ENCODE measurements at regions of chr7 and their contacts with region 1.

Region 1: DNA sequence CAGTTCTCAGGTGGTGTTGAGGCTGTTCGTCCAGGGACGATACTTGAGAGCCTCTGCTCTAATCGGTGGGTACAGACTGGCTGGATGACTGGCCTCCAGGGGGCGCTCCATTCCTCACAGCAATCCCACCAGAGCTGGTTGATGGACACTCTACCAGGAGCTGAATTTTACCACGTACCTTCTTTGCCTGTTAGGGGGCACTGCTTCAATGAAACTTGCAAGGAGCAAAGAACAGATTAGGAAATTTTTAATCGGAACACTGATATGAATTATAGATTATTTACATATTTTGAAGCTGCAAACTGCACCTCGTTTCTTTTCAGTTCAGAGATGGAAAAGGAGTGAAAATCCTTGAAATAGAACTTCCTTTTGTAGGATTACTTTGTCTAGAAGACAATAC is 44.9 kb downstream of the KBTBD2 start:
- DNase-seq: peak; percentile 91
- ATAC-seq: peak; percentile 100
- H3K4me3 ChIP-seq: no peak overlapping the region
- H3K4me3 Mint-ChIP-seq: no peak overlapping the region
- H3K27ac ChIP-seq: no peak overlapping the region
- H3K27ac Mint-ChIP-seq: no peak overlapping the region
- H3K4me1 ChIP-seq: peaks cover 6 to 7% of the 10 kb centered on the region in 2 donors
- H3K4me1 Mint-ChIP-seq: peaks cover 7% of the 10 kb centered on the region
- H3K27me3 ChIP-seq: peaks cover 0 to 7% (median 1%) of the 10 kb centered on the region in 4 experiments
- H3K27me3 Mint-ChIP-seq: peaks cover 18% of the 10 kb centered on the region
- CTCF ChIP-seq: peak; percentile 89

Region 2: GRCh38 chr7:32694182-32694581 is 152.5 kb before region 1 on chr7:
- CTCF ChIA-PET with region 1: interaction called, 4 read pairs
- POLR2A ChIA-PET with region 1: no interaction called
- intact Hi-C with region 1: loop called (anchors 2 kb)
- DNase-seq: no peak
- ATAC-seq: no peak
- H3K4me3 ChIP-seq: no peak overlapping the region
- H3K4me3 Mint-ChIP-seq: no peak overlapping the region
- H3K27ac ChIP-seq: no peak overlapping the region
- H3K27ac Mint-ChIP-seq: no peak overlapping the region
- H3K4me1 ChIP-seq: peaks cover 10 to 12% of the 10 kb centered on the region in 2 donors
- H3K4me1 Mint-ChIP-seq: peaks cover 16% of the 10 kb centered on the region
- H3K27me3 ChIP-seq: no peaks in the 10 kb centered on the region
- H3K27me3 Mint-ChIP-seq: no peaks in the 10 kb centered on the region
- CTCF ChIP-seq: no peak

Region 3: GRCh38 chr7:32891800-32892520 is 45.3 kb after region 1 on chr7:
- CTCF ChIA-PET with region 1: interaction called, 39 read pairs
- POLR2A ChIA-PET with region 1: interaction called, 5 read pairs
- intact Hi-C with region 1: loop called (anchors 1 kb)
- DNase-seq: peak; percentile 99
- ATAC-seq: peak; percentile 64
- H3K4me3 ChIP-seq: peak overlapping the region; percentile 18 to 82 (median 74)
- H3K4me3 Mint-ChIP-seq: peak overlapping the region; percentile 87
- H3K27ac ChIP-seq: peak overlapping the region; percentile 98 to 100
- H3K27ac Mint-ChIP-seq: peak overlapping the region; percentile 96
- H3K4me1 ChIP-seq: peaks cover 36 to 39% of the 10 kb centered on the region in 2 donors
- H3K4me1 Mint-ChIP-seq: peaks cover 46% of the 10 kb centered on the region
- H3K27me3 ChIP-seq: no peaks in the 10 kb centered on the region
- H3K27me3 Mint-ChIP-seq: peaks cover 2% of the 10 kb centered on the region
- CTCF ChIP-seq: no peak

Region 4: GRCh38 chr7:33050535-33051318 is 204.0 kb after region 1 on chr7:
- CTCF ChIA-PET with region 1: interaction called, 23 read pairs
- POLR2A ChIA-PET with region 1: no interaction called
- intact Hi-C with region 1: loop called (anchors 1 kb)
- DNase-seq: peak; percentile 73
- ATAC-seq: peak; percentile 70
- H3K4me3 ChIP-seq: peak overlapping the region in 2 of 5 experiments; percentile 40 to 48
- H3K4me3 Mint-ChIP-seq: peak overlapping the region; percentile 29
- H3K27ac ChIP-seq: peak overlapping the region; percentile 60 to 83
- H3K27ac Mint-ChIP-seq: peak overlapping the region; percentile 28
- H3K4me1 ChIP-seq: peaks cover 39 to 47% of the 10 kb centered on the region in 2 donors
- H3K4me1 Mint-ChIP-seq: peaks cover 55% of the 10 kb centered on the region
- H3K27me3 ChIP-seq: no peaks in the 10 kb centered on the region
- H3K27me3 Mint-ChIP-seq: no peaks in the 10 kb centered on the region
- CTCF ChIP-seq: peak; percentile 76